ENCODE measurements at regions of chr22 and their contacts with region 1.

Region 1: DNA sequence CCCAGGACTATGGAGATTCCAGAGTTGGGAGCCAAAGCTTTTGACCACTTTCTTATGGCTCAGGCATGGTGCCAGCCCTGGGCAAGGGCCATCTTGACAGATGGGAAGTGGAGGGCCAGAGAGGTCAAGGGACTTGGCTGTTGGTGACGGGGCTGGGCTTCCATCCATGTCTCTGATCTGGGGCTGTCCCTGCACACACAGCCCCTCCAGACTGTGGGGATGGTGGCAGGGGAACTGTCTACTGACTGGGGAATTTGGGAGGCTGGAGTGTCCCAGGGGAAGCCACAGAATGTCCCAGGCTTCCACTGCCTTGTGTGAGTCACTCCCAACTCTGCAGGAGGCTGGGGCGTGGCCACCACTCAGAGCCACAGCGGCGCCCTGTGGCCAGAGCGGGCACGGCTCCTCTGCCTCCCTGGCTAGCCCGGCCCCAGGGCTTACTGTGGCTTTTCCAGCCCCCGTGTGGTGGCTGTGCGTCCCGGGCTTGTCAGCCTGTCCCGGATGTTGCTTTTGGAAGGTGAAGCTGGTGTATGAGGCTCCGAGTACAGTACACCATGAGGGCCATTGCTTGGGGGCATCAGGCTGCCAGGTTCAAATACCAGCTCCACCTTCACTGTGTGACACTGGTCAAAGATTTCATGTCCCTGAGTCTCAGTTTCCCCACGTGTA is 19.6 kb downstream of the C22orf23 start:
- DNase-seq: peak; percentile 67 to 79 (median 72)
- H3K4me3 ChIP-seq: no peak overlapping the region
- H3K4me3 Mint-ChIP-seq: peak overlapping the region in 1 of 8 donors; percentile 26
- H3K27ac ChIP-seq: no peak overlapping the region
- H3K27ac Mint-ChIP-seq: peak overlapping the region in 2 of 7 donors; percentile 22 to 24
- H3K4me1 ChIP-seq: peaks cover 11% of the 10 kb centered on the region
- H3K4me1 Mint-ChIP-seq: peaks cover 7 to 13% (median 8%) of the 10 kb centered on the region in 4 donors
- H3K27me3 ChIP-seq: no peaks in the 10 kb centered on the region
- H3K27me3 Mint-ChIP-seq: no peaks in the 10 kb centered on the region

Region 2: GRCh38 chr22:37647928-37648327 is 285.9 kb before region 1 on chr22:
- CTCF ChIA-PET with region 1: no interaction called
- POLR2A ChIA-PET with region 1: no interaction called
- intact Hi-C with region 1: no loop called
- DNase-seq: no peak
- H3K4me3 ChIP-seq: no peak overlapping the region
- H3K4me3 Mint-ChIP-seq: no peak overlapping the region
- H3K27ac ChIP-seq: no peak overlapping the region
- H3K27ac Mint-ChIP-seq: peak overlapping the region in 1 of 7 donors; percentile 25
- H3K4me1 ChIP-seq: peaks cover 10% of the 10 kb centered on the region
- H3K4me1 Mint-ChIP-seq: peaks cover 7 to 20% (median 11%) of the 10 kb centered on the region in 4 donors
- H3K27me3 ChIP-seq: no peaks in the 10 kb centered on the region
- H3K27me3 Mint-ChIP-seq: no peaks in the 10 kb centered on the region

Region 3: DNA sequence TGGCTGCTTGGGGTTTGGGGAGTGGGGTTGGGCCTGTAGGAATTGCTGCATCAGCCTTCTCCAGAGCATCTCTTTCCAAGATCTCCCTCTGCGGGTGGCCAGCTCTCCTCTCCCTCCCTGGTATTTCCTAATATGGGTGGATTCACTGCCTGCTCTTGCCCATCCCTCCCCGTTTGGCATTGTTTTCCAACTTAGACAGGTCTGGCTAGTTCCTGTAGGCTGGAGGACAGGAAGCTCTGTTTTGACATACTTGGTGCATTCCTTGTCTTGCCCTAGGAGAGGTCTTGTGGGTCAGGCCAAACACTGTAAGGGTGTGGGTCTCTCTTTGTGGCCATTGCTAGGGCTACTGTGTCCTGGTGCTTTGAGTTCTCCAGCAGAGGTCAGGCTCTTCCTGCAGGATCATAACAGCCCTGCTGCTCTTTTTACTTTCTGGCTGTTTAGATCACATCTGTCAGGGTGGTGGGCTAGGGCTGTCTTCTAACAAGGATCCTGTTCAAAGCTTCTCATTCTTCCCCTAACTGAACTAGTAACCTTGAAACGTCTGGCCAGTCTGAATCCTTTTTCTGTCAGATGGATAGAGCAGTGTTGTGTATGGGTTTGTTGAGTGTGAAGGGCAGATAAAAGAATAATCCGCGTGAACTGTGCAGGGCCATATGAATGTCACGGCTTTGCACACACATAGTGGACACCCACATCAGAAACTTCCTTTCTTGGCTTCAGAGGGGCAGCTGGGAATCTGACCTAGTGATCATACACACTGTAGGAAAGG is 46.0 kb before region 1 on chr22:
- CTCF ChIA-PET with region 1: interaction called, 7 read pairs
- POLR2A ChIA-PET with region 1: no interaction called
- intact Hi-C with region 1: loop called (anchors 1 kb)
- DNase-seq: no peak
- H3K4me3 ChIP-seq: no peak overlapping the region
- H3K4me3 Mint-ChIP-seq: no peak overlapping the region
- H3K27ac ChIP-seq: no peak overlapping the region
- H3K27ac Mint-ChIP-seq: peak overlapping the region in 3 of 7 donors; percentile 2 to 36 (median 27)
- H3K4me1 ChIP-seq: no peaks in the 10 kb centered on the region
- H3K4me1 Mint-ChIP-seq: peaks cover 4 to 10% (median 9%) of the 10 kb centered on the region in 4 donors
- H3K27me3 ChIP-seq: no peaks in the 10 kb centered on the region
- H3K27me3 Mint-ChIP-seq: no peaks in the 10 kb centered on the region

Region 4: GRCh38 chr22:37896181-37896592 is 37.7 kb before region 1 on chr22:
- CTCF ChIA-PET with region 1: interaction called, 39 read pairs
- POLR2A ChIA-PET with region 1: interaction called, 4 read pairs
- intact Hi-C with region 1: no loop called
- DNase-seq: peak; percentile 43 to 67 (median 50)
- H3K4me3 ChIP-seq: peak overlapping the region in 1 of 2 donors; percentile 4
- H3K4me3 Mint-ChIP-seq: peak overlapping the region; percentile 61 to 81 (median 70)
- H3K27ac ChIP-seq: peak overlapping the region; percentile 56
- H3K27ac Mint-ChIP-seq: peak overlapping the region; percentile 93 to 96 (median 95)
- H3K4me1 ChIP-seq: peaks cover 14% of the 10 kb centered on the region
- H3K4me1 Mint-ChIP-seq: peaks cover 16 to 35% (median 27%) of the 10 kb centered on the region in 4 donors
- H3K27me3 ChIP-seq: no peaks in the 10 kb centered on the region
- H3K27me3 Mint-ChIP-seq: no peaks in the 10 kb centered on the region

Region 5: DNA sequence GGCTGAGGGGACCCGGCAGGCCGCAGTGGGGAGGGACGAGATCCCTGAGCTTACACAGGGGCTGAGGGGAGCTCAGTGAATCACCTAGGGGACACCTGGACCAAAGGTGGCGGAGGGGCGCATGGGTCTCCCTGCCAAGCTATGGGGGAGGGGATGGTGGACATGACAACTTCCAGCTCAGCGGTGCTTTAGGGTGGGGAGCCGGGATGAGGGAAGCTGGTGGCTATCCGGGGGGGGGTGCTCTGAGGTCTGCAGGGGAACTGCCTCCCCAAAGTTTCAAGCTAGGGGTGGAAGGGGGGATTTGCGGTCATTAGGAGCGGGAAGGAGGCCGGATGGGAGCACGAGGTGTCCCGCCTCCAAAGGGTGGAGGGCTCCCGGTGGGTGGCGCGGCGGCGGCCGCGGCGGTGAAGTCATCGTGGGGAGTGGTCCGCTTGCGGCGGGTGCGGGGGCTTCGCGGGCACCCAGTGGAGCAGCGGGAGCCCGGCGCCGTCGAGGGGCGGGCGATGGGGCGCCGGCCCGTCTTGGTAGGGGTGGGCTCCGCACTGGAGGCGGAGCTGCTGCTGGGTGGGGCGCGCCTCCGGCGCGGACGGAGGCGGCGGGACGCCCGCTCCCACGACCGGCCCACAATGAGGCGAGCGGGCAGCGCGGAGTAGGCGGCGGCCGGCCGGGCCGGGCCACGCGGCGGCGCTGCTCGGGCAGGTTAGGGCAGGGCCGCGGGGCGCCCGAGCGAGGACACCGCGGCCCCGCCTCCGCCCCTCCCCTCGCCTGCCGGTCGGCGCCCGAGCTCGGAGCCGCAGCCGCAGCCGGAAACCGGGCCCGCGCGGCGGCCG is 28.1 kb before region 1 on chr22 and contains the start of gene MICALL1:
- CTCF ChIA-PET with region 1: interaction called, 28 read pairs
- POLR2A ChIA-PET with region 1: interaction called, 6 read pairs
- intact Hi-C with region 1: loop called (anchors 1 kb)
- DNase-seq: peak; percentile 56 to 74 (median 62)
- H3K4me3 ChIP-seq: peak within 1 kb of the TSS; percentile 3 to 58
- H3K4me3 Mint-ChIP-seq: peak within 1 kb of the TSS; percentile 77 to 88 (median 84)
- H3K27ac ChIP-seq: peak within 1 kb of the TSS; percentile 58
- H3K27ac Mint-ChIP-seq: peak within 1 kb of the TSS; percentile 48 to 93 (median 88)
- H3K4me1 ChIP-seq: peaks cover 18% of the 10 kb centered on the region
- H3K4me1 Mint-ChIP-seq: peaks cover 18 to 45% (median 28%) of the 10 kb centered on the region in 4 donors
- H3K27me3 ChIP-seq: no peaks in the 10 kb centered on the region
- H3K27me3 Mint-ChIP-seq: no peaks in the 10 kb centered on the region
- total RNA-seq, gene MICALL1: 30.7 to 31.0 TPM

Region 6: DNA sequence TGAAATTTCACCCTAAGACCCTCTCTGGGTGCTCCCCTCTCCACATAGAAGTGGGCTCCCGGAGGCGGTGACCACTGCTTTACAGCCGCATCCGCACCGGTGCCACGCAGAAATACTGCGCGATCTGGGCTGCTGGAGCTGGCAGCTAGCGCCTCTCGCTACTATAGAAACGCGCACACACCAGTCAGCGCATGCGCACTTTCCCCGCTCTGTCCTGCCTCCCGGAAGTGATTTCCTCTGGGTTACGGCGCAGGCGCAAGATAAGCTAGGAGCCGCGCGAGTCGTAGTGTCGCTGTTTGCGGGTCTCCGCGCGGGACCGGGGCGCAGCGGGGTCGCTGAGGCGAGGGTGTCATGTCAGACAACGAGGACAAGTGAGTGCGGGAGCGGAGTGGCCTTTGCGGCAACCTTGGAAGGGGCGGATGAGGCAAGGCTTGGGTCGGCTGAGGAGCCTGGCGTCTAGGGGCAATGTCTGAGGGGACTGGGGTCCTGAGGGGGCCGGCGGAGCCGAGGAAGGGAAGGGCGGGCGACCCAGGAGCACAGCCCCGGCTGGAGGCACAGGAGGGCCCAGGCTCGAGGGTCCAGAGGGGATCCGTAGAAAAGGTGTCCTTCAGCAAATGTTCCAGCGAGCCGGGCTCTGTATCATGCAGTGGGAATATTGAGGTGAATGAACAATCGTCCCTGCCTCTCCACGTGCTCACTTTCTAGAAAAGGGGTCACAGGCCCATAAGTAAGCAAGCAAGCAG is 19.8 kb after region 1 on chr22 and contains the starts of genes C22orf23 and POLR2F:
- CTCF ChIA-PET with region 1: interaction called, 6 read pairs
- POLR2A ChIA-PET with region 1: interaction called, 12 read pairs
- intact Hi-C with region 1: loop called (anchors 1 kb)
- DNase-seq: peak; percentile 94 to 96 (median 95)
- H3K4me3 ChIP-seq: peak within 1 kb of the TSS; percentile 72 to 91
- H3K4me3 Mint-ChIP-seq: peak within 1 kb of the TSS; percentile 96 to 100 (median 100)
- H3K27ac ChIP-seq: peak within 1 kb of the TSS; percentile 72
- H3K27ac Mint-ChIP-seq: peak within 1 kb of the TSS; percentile 76 to 100 (median 99)
- H3K4me1 ChIP-seq: peaks cover 20% of the 10 kb centered on the region
- H3K4me1 Mint-ChIP-seq: peaks cover 33 to 52% (median 40%) of the 10 kb centered on the region in 4 donors
- H3K27me3 ChIP-seq: peaks cover 3% of the 10 kb centered on the region
- H3K27me3 Mint-ChIP-seq: peaks cover 9 to 13% of the 10 kb centered on the region in 2 donors
- total RNA-seq, gene C22orf23: not detected
- total RNA-seq, gene POLR2F: 44.9 to 47.5 TPM

Region 7: GRCh38 chr22:37965940-37966664 is 32.3 kb after region 1 on chr22:
- CTCF ChIA-PET with region 1: interaction called, 5 read pairs
- POLR2A ChIA-PET with region 1: no interaction called
- intact Hi-C with region 1: loop called (anchors 1 kb)
- DNase-seq: no peak
- H3K4me3 ChIP-seq: no peak overlapping the region
- H3K4me3 Mint-ChIP-seq: no peak overlapping the region
- H3K27ac ChIP-seq: no peak overlapping the region
- H3K27ac Mint-ChIP-seq: no peak overlapping the region
- H3K4me1 ChIP-seq: no peaks in the 10 kb centered on the region
- H3K4me1 Mint-ChIP-seq: peaks cover 5 to 10% (median 6%) of the 10 kb centered on the region in 4 donors
- H3K27me3 ChIP-seq: no peaks in the 10 kb centered on the region
- H3K27me3 Mint-ChIP-seq: no peaks in the 10 kb centered on the region